GM10248 (cell line): ENCODE measurements at regions of chr13 and their contacts with region 1.

Region 1: DNA sequence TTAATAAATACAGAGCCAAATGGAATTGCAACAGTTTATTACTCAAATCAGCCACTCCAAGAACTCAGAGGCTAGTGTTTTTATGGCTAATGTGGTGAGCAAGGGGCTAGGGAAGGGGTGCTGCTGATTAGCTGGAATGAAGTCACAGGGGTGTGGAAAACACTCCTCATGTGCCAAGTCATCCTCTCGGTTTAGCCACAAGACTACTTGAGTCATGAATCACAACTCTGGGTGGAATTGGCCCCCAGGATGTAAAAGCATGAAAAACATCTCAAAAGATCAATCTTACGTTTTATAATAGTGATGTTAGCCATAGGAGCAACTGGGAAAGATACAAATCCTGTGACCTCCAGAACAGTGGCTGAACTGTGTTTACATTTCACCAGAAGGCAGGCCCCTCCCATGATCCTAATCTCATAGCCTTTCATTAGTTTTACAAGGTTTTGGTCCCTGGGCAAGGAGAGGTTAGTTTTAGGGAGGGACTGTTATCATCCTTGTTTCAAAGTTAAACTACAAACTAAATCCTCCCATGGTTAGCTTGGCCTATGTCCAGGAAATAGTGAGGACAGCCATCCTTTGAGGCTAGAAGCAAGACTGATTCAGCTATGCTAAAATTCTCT is 2020.1 kb upstream of the PCDH20 start:
- DNase-seq: no peak
- CTCF ChIP-seq: no peak

Region 2: DNA sequence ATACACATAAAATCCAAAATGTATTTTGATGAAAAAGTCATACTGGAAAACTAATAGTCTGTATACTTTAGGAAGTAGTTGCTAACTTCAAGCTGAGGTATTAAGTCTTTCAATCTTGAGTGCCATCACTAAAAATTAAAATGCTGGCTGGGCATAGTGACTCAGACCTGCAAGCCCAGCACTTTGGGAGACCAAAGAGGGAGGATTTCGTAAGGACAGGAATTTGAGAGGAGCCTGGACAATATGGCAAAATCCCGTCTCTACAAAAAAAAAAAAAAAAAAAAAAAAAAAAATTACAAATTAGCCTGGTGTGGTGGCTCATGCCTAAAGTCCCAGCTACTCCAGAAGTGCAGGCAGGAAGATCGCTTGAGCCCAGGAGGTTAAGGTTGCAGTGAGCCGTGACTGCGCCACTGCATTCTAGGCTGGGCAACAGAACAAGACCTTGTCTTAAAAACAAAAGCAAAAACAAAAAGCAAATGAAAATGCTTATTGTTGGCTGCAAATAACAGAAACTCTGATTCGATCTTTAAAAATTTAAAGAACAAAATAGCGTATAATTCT is 25.9 kb before region 1 on chr13:
- CTCF ChIA-PET with region 1: no interaction called
- POLR2A ChIA-PET with region 1: no interaction called
- DNase-seq: no peak
- CTCF ChIP-seq: no peak

Region 3: GRCh38 chr13:63425131-63425530 is 10.6 kb before region 1 on chr13:
- CTCF ChIA-PET with region 1: interaction called, 26 read pairs
- POLR2A ChIA-PET with region 1: no interaction called
- DNase-seq: no peak
- CTCF ChIP-seq: no peak